T-cell (primary cell): ENCODE measurements at regions of chr1 and their contacts with region 1.

Region 1: GRCh38 chr1:52558941-52559340 is 6.0 kb upstream of the TUT4 start:
- DNase-seq: no peak
- ATAC-seq: no peak
- H3K4me3 ChIP-seq: no peak overlapping the region
- H3K4me3 Mint-ChIP-seq: no peak overlapping the region
- H3K27ac ChIP-seq: no peak overlapping the region
- H3K27ac Mint-ChIP-seq: no peak overlapping the region
- H3K4me1 ChIP-seq: peaks cover 3 to 10% of the 10 kb centered on the region in 2 experiments
- H3K4me1 Mint-ChIP-seq: peaks cover 12 to 22% (median 15%) of the 10 kb centered on the region in 3 donors
- H3K27me3 ChIP-seq: no peaks in the 10 kb centered on the region
- H3K27me3 Mint-ChIP-seq: no peaks in the 10 kb centered on the region

Region 2: DNA sequence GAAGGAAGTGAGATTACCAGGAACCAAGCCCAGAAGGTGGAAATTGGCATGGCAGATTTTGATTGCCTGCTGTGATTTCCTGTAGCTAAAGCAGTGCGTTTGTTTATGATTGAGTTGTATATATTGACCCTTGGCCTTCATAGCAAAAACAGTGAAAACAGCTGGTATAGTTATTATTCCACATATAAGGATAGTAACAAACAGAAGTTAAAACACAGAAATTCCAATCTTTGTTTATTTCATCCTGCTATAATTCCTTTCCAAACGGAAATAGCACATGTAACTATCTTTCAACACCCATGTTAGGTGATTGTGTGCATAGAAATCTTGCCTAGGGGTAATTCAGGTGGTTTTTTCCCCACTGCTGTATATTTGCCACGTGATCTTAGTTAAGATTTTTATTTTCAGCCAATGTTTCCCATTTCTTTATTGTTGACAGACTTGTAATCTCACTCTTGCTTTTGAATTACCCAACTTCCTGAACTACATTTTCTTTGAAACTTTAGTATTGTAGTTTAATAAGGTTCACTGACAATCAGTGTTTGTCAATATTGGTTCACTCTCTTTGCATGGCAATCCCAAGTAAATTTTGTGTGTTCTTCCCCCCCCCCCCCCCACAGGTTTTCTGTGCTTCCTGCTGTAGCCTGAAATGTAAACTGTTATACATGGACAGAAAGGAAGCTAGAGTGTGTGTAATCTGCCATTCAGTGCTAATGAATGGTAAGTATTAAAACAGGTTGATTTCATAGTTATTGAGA is 295.6 kb before region 1 on chr1:
- CTCF ChIA-PET with region 1: no interaction called
- POLR2A ChIA-PET with region 1: interaction called in 1 of 2 experiments, 10 read pairs
- DNase-seq: no peak
- ATAC-seq: no peak
- H3K4me3 ChIP-seq: no peak overlapping the region
- H3K4me3 Mint-ChIP-seq: no peak overlapping the region
- H3K27ac ChIP-seq: no peak overlapping the region
- H3K27ac Mint-ChIP-seq: no peak overlapping the region
- H3K4me1 ChIP-seq: no peaks in the 10 kb centered on the region
- H3K4me1 Mint-ChIP-seq: no peaks in the 10 kb centered on the region
- H3K27me3 ChIP-seq: no peaks in the 10 kb centered on the region
- H3K27me3 Mint-ChIP-seq: no peaks in the 10 kb centered on the region

Region 3: DNA sequence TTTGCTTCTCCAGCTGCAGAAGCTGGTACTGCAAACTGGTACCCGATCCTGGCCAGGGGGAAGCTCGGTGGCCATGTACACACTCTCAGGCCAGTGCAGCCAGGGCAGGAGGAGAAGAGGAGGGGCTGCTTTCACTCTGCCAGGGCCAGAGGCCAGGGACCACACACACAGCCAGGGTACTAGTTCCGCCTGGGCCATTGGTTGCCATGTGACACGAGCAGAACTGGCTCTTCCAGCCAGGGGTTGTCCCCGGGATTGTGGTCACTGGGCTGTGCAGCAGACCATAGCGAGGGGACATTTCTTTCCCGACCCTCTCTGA is 70.3 kb after region 1 on chr1:
- CTCF ChIA-PET with region 1: interaction called in 1 of 2 experiments, 3 read pairs
- POLR2A ChIA-PET with region 1: interaction called in 1 of 2 experiments, 11 read pairs
- DNase-seq: no peak
- ATAC-seq: no peak
- H3K4me3 ChIP-seq: no peak overlapping the region
- H3K4me3 Mint-ChIP-seq: no peak overlapping the region
- H3K27ac ChIP-seq: no peak overlapping the region
- H3K27ac Mint-ChIP-seq: peak overlapping the region in 1 of 2 donors; percentile 73
- H3K4me1 ChIP-seq: peaks cover 10 to 43% of the 10 kb centered on the region in 2 experiments
- H3K4me1 Mint-ChIP-seq: peaks cover 47 to 55% (median 49%) of the 10 kb centered on the region in 3 donors
- H3K27me3 ChIP-seq: no peaks in the 10 kb centered on the region
- H3K27me3 Mint-ChIP-seq: no peaks in the 10 kb centered on the region

Region 4: DNA sequence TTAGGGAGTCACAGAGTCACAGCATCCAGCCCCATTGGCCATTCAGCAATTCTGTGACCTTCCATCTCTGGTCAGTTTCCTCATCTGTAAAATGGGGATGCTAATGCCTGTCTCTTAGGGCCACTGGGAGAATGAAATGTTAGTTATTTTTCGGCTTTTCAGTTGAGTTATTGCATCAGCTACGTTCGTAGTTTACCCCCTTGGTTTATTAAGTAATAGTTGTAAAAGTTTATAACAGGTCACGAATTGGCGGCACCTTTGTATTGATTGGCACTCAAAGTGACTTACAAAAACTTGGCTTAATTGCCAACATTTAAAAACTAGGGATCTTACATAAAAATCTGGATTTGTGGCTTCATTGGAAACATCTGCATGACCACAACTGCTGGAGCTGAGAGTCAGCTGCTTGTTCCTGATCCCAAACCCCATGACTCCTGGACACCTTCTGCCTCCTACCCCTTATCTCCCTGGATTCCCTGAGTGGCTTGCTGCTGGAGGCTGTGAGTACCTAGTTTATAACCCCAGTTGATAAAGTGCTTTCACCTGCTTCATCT is 606.5 kb after region 1 on chr1:
- CTCF ChIA-PET with region 1: no interaction called
- POLR2A ChIA-PET with region 1: no interaction called
- DNase-seq: no peak
- ATAC-seq: no peak
- H3K4me3 ChIP-seq: no peak overlapping the region
- H3K4me3 Mint-ChIP-seq: no peak overlapping the region
- H3K27ac ChIP-seq: no peak overlapping the region
- H3K27ac Mint-ChIP-seq: no peak overlapping the region
- H3K4me1 ChIP-seq: no peaks in the 10 kb centered on the region
- H3K4me1 Mint-ChIP-seq: no peaks in the 10 kb centered on the region
- H3K27me3 ChIP-seq: peaks cover 0 to 12% of the 10 kb centered on the region in 2 experiments
- H3K27me3 Mint-ChIP-seq: peaks cover 9 to 12% of the 10 kb centered on the region in 2 donors